Posterior vena cava (tissue), 2 donors: ENCODE measurements at regions of chr3 and their contacts with region 1.

Region 1: GRCh38 chr3:27134165-27134796 is 234.9 kb downstream of the NEK10 start:
- DNase-seq: no peak

Region 2: DNA sequence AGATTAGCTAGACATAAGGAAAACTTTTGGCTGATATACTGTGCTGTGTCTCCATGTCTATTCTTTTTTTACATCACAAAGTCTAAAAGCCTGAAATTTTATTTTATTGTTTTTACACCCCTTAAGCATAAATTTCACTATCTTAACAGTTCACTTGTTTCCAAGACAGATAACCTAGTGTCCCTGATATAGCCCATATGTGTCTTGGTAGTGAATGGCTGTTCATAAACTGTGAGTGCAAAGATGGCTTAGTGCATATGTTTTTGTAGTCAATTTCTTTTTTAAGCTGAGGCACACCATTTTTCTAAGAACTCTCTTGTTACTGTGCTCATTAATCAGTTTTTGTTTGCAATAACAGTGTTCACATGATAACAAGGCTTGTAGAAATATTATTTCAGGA is 963.3 kb before region 1 on chr3:
- intact Hi-C with region 1: no loop called
- DNase-seq: no peak

Region 3: GRCh38 chr3:27105904-27106303 is 28.4 kb before region 1 on chr3:
- intact Hi-C with region 1: no loop called
- DNase-seq: no peak

Region 4: GRCh38 chr3:27166888-27167287 is 32.6 kb after region 1 on chr3:
- intact Hi-C with region 1: no loop called
- DNase-seq: no peak

Region 5: DNA sequence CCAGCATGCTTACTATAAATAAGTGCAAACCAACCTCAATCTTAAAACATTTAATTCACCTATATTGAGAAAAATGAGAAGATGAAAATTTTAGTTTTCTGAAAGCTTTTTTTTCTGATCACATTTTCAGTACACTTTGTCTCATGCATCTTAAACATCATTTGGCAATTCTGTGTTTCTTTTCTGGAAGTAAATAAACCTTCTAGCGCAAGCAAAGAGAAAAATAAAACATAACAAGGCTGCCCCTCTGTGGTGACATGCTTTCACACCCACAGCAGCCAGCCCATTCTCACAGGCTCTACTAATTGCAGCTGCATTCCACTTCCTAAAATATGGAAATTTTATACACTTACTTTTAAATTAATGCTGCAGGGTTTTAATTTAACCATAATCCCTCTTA is 144.8 kb after region 1 on chr3:
- intact Hi-C with region 1: loop called in 1 of 2 experiments (anchors 10 kb)
- DNase-seq: no peak